GM23248 (cell line): ENCODE measurements at regions of chr12 and their contacts with region 1.

Region 1: DNA sequence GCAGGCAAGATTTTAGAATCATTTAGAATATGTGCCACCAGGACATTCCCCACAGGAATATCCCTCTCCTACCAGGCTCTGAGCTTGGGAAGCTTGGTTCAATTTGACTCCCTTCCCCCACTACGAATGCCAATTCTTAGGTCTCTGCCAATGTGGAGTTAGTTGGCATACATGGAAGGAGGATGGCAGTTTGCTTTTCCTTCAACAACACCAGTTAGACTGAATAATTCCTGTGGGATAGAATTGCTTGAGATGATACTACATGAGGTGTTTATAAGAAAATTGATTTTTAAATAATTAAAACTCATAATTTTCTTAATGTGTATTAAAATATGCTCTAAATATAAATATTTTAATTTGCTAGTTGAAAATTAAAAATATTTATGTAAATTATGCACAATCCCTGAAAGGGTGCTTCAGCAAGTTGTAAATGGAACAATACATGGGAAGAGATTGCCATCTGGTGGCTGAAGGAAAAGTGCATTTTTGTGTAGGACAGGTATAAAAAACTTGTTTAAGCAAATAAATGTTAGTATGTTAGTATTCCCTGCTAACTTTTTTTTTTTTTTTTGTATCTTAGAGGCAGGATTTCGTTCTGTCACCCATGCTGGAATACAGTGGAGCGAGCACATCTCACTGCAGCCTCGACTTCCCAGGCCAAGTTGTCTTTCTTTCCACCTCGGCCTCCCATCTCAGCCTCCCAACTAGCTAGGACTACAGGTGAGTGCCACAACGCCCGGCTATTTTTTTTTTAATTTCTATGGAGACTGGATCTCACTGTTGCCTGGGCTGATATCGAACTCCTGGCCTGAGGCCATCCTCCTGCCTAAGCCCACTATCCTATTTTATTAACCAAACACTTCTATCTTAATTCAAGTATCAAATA is 25.8 kb upstream of the STRAP start:
- DNase-seq: peak; percentile 74
- H3K4me3 ChIP-seq: peak overlapping the region; percentile 47
- H3K27ac ChIP-seq: peak overlapping the region; percentile 44
- H3K4me1 ChIP-seq: peaks cover 25% of the 10 kb centered on the region
- H3K27me3 ChIP-seq: no peaks in the 10 kb centered on the region

Region 2: DNA sequence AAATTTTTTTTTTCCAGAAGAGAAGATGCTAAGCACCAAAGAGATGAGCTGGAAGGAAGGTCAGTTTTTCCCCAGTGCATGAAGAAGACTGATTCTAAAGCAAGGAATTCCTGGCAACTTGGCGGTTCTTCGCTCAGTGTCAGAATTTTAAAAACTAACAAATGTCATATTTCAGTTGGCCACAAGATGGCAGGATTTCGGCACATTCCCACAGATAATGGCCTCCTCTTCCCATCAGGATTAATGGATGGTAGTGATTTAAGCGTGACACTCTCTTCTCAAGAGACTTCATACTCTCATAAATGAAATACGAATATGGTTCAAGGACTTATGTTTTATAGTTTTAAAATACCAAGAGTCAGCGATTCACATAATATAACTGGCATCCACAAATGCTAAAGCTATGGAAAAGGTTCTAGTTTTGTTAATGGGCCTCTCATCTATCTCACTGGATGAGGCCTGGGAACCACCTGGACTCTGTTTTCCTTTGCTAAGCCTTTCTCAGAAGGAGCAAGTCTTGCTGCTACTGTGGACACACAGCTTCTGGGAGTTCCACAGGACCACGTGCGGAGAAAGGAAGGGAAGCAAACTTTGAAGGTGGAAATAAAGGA is 580.1 kb before region 1 on chr12:
- in situ Hi-C with region 1: loop called (anchors 25 kb)
- DNase-seq: peak; percentile 57
- H3K4me3 ChIP-seq: no peak overlapping the region
- H3K27ac ChIP-seq: no peak overlapping the region
- H3K4me1 ChIP-seq: peaks cover 19% of the 10 kb centered on the region
- H3K27me3 ChIP-seq: no peaks in the 10 kb centered on the region

Region 3: DNA sequence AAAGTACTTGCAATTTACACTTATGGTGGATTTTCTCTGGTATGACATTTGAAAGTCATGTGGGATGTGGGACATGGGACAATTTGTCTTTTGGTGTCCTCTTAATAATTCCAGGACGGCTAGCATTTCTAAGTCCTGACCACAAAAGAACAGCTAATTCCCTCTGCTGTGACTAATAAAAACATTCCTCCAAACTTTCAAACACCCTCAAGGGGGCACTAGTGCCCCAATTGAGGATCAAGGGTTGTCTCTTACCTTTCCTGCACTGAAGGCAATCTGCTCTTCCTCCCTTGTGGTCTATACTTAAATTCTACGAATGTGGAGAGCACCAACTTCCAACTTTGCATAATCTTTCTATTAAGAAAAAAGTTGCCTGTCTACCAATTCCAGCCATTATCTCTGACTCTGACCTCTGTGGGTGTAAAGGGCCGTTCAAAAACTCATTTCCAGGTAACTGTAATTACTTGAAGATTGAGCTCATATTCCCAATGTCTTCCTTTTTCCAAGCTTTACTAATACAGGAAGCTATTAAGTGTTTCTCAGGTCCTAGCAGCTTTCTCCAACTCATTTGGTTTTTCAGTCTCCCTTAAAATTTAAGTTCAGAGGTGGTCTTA is 323.9 kb before region 1 on chr12:
- in situ Hi-C with region 1: loop called (anchors 10 kb)
- DNase-seq: peak; percentile 84
- H3K4me3 ChIP-seq: no peak overlapping the region
- H3K27ac ChIP-seq: no peak overlapping the region
- H3K4me1 ChIP-seq: peaks cover 22% of the 10 kb centered on the region
- H3K27me3 ChIP-seq: no peaks in the 10 kb centered on the region

Region 4: DNA sequence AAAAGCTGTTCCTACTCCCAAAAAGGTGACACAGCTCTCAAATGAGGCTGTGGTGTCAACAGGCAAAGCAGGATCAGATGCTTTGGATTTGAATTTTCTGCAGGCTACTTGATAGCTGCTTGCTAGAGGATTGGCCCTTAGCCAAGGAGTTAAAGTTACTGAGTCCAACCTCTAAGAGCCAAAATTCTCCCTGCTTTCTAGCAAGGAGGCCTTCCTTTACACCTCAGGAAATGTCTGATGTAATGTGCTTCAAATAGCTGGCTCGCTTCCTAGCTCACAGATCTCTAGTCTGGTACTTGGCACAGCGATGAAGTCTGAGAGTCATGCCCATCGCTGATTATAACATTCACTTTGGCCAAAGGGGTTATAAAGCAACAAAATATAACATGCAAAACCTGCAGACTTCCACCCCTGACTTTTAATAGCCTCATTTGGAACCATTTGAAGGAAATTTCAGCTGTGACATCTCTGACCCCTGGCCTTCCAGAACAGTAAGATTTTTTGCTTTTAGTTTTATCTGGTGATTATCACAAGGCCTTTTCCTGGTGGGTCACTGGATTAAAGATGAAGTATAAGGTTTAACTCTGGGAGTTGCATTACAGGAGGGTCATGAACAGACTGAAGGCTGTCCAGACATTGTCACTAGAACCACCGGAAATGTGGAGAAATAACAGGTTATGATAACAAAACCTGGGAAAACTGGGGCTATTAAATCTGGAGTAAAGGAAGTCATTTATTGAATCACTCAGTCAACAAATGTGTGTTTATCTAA is 256.9 kb before region 1 on chr12:
- in situ Hi-C with region 1: loop called (anchors 5 kb)
- DNase-seq: peak; percentile 82
- H3K4me3 ChIP-seq: no peak overlapping the region
- H3K27ac ChIP-seq: peak overlapping the region; percentile 38; the same call in 1 of the 2 replicates
- H3K4me1 ChIP-seq: peaks cover 43% of the 10 kb centered on the region
- H3K27me3 ChIP-seq: no peaks in the 10 kb centered on the region

Region 5: DNA sequence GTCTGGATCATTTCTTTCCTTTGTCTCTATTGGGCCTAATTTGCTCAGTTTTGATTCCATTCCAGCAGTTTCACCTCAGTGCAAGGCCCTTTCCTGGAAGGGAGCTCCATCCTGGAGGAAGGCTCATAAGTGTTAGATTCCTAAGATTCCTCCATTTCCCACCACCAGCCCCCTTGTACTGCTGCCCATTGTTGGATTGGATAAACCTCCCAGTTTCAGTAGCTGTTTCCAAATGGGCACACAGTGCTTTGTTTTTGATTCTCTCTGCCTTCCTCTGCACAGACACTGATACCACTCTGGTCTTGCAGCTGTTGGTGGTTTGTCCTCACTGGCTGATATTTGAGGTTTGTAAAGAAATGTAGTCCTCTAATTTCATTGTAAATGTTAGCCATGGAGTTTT is 262.2 kb after region 1 on chr12:
- in situ Hi-C with region 1: no loop called
- DNase-seq: no peak
- H3K4me3 ChIP-seq: no peak overlapping the region
- H3K27ac ChIP-seq: no peak overlapping the region
- H3K4me1 ChIP-seq: no peaks in the 10 kb centered on the region
- H3K27me3 ChIP-seq: no peaks in the 10 kb centered on the region

Region 6: DNA sequence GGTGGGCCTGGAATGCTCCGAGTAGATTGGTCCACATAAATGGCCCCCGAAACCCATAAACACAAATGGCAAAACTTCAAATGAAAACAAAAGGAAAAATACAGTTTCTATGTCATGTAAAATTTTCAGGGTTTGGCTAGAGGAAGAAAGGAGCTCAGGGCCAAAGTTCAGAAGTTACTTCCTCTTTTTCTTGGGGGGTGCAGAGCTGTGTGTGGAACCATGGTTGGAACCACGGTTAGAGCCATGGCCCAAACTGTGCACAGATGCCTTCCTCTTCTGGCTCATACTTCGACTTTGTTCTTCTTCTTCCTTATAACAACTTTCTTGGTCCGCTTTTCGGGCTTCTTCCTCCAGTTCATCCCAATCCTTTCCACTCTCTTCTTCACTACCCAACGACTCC is 542.8 kb after region 1 on chr12:
- in situ Hi-C with region 1: no loop called
- DNase-seq: no peak
- H3K4me3 ChIP-seq: no peak overlapping the region
- H3K27ac ChIP-seq: no peak overlapping the region
- H3K4me1 ChIP-seq: no peaks in the 10 kb centered on the region
- H3K27me3 ChIP-seq: no peaks in the 10 kb centered on the region